Mammary epithelial cell (primary cell): ENCODE measurements at regions of chr14 and their contacts with region 1.

Region 1: GRCh38 chr14:76904740-76905438 is 78.7 kb downstream of the LRRC74A start:
- DNase-seq: peak; percentile 98
- H3K4me3 ChIP-seq: no peak overlapping the region
- H3K27ac ChIP-seq: peak overlapping the region; percentile 58
- H3K4me1 ChIP-seq: peaks cover 41% of the 10 kb centered on the region
- H3K27me3 ChIP-seq: no peaks in the 10 kb centered on the region
- CTCF ChIP-seq: no peak

Region 2: DNA sequence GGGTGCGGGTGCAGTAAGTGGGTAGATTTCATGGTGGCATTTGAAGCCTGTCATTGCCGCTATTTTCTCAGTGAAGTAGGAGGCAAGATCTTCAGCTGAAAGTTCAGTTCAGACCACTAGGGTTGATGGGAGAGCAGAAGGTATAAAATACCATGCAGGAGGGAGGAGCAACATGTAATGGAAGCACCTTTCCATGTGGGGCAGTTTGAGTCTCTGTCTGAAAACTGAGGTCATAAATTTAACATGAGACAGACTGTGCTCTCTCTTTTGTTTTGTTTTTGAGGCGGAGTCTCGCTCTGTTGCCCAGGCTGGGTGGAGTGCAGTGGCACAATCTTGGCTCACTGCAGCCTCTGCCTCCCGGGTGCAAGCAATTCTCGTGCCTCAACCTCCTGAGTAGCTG is 56.0 kb before region 1 on chr14:
- CTCF ChIA-PET with region 1: no interaction called
- dilution Hi-C with region 1: loop called (anchors 5 kb)
- in situ Hi-C with region 1: no loop called
- intact Hi-C with region 1: no loop called
- DNase-seq: no peak
- H3K4me3 ChIP-seq: no peak overlapping the region
- H3K27ac ChIP-seq: no peak overlapping the region
- H3K4me1 ChIP-seq: no peaks in the 10 kb centered on the region
- H3K27me3 ChIP-seq: no peaks in the 10 kb centered on the region
- CTCF ChIP-seq: no peak

Region 3: GRCh38 chr14:76937181-76938091 is 32.5 kb after region 1 on chr14:
- CTCF ChIA-PET with region 1: no interaction called
- dilution Hi-C with region 1: loop called (anchors 5 kb)
- in situ Hi-C with region 1: no loop called
- intact Hi-C with region 1: no loop called
- DNase-seq: peak; percentile 54
- H3K4me3 ChIP-seq: no peak overlapping the region
- H3K27ac ChIP-seq: peak overlapping the region; percentile 69
- H3K4me1 ChIP-seq: peaks cover 30% of the 10 kb centered on the region
- H3K27me3 ChIP-seq: no peaks in the 10 kb centered on the region
- CTCF ChIP-seq: no peak

Region 4: DNA sequence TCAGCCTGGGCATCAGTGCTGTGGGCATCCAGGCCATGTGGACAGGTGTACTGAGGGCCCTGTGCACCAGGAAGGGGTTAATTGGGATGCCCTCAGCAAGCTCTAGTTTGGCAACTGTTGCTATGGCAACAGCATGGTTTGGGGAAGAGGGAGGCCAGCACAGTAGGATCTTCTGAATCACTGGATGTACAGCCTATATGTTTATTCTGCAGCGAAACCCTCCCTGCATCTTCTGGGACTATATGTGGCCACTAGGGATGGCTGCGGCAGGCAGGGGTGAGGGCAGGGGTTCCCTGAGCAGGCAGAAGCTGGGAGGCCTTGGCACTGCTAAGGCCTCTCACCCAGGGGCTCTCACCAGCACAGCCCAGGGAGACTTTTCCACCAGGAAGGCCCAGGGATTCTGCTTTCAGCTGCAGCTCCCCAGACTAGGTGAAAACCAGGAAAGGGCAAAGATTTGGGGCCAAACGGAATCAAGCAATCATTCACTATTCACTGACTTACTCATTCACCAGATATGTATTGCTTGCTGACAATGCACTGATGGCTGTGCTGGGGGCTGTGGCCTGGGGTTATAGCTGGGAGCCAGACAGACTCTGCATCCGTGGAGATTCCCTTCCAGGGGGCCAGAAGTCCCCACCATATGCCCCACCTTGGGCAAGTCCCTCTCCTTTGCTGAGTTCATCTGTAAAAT is 80.8 kb after region 1 on chr14:
- CTCF ChIA-PET with region 1: no interaction called
- dilution Hi-C with region 1: loop called (anchors 5 kb)
- in situ Hi-C with region 1: no loop called
- intact Hi-C with region 1: no loop called
- DNase-seq: no peak
- H3K4me3 ChIP-seq: no peak overlapping the region
- H3K27ac ChIP-seq: no peak overlapping the region
- H3K4me1 ChIP-seq: no peaks in the 10 kb centered on the region
- H3K27me3 ChIP-seq: no peaks in the 10 kb centered on the region
- CTCF ChIP-seq: no peak